ENCODE measurements at regions of chr3 and their contacts with region 1.

Region 1: DNA sequence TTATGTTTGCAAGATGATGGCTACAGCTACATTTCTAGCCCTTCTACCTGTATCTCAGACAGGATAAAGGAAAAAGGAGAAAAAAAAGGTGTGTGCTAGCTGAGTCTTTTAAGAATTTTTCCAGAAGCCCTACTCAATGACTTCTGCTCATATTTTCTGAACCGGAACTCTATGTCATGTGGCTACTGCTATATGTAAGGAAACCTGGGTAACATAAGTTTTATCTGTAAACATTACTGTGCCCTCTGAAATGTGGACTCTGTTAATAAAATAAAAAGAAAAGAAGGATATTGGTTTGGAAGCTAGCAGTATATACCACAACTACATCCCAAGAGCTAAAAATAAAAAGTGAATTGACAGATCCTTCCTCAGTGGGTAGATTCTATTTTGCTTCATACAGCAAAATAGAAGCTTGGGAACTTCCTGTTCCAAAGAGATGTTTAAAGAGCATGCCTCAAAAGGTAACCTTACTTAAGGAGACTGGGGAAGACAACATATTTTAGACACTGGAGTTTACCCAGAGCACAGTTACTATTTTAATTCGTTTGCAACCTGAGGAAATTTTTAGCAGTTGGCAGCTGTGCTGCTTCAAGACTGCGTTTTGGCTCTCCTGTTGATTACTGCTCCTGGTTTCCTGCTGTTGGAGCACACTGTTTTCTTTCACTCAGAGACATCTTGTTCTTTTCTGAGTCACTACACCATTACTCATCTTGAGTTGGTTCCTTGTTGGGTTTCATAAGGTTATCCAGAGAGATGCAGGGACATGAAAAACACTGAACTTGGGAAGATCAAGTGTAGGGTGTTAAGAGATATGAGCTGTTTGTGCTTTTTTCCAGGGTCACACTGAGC is 280.7 kb downstream of the NFKBIZ start:
- DNase-seq: no peak
- ATAC-seq: peak; percentile 91
- H3K4me3 ChIP-seq: no peak overlapping the region
- H3K27ac ChIP-seq: peak overlapping the region in 1 of 2 donors; percentile 43
- H3K4me1 ChIP-seq: peaks cover 3% of the 10 kb centered on the region in 2 donors
- H3K27me3 ChIP-seq: no peaks in the 10 kb centered on the region

Region 2: DNA sequence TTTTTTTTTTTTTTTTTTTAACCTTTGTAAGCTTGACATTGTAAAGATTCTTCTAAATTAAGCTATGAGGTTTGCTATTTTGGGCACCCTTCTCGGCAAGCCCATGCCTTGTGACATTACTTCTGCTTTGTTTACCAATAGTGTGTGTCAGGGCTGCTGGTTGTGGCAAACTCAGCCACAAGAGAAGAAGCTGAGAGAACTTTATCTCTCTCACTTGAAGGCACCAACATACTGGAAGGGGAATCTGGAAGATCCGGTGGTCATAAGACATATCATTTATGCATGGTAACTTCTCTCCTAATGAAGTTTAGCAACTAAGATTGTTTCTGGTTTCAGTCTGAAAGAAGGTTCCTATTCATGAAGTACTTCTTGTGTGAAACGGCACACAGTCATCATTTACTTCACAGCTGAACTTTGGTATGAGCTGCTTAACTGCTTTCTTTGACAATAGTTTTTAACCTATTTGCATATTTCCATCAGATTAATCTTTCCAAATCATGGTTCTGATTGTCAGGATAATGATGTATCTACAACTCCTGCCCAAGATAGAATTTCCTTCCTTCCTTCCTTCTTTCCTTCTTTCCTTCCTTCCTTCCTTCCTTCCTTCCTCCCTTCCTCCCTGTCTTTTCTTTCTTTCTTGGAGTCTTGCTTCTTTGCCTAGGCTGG is 91.4 kb before region 1 on chr3:
- intact Hi-C with region 1: loop called in 1 of 2 experiments (anchors 10 kb)
- DNase-seq: no peak
- ATAC-seq: no peak
- H3K4me3 ChIP-seq: no peak overlapping the region
- H3K27ac ChIP-seq: peak overlapping the region in 1 of 2 donors; percentile 78
- H3K4me1 ChIP-seq: peaks cover 0 to 4% of the 10 kb centered on the region in 2 donors
- H3K27me3 ChIP-seq: no peaks in the 10 kb centered on the region

Region 3: DNA sequence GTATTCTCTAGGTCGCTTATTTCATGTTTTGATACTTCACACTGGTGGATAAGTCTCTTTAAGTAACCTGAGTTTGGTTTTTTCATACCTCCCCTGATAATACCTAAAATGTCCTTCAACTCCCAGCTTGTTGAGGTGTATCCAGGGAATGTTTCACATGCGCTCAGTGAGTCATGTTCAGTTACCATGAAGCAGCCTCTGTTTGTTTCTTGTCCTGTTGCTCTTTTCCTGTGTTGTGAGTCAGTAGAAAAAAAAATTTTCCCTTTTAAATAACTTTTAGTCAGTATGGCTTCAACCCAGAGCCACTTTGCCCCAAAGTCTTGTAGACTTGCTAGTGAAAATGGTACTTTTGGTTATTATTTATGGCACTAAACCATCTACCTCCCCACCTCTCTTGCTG is 26.4 kb after region 1 on chr3:
- intact Hi-C with region 1: loop called in 1 of 2 experiments (anchors 2 kb)
- DNase-seq: no peak
- ATAC-seq: no peak
- H3K4me3 ChIP-seq: no peak overlapping the region
- H3K27ac ChIP-seq: peak overlapping the region; percentile 28 to 82
- H3K4me1 ChIP-seq: peaks cover 0 to 6% of the 10 kb centered on the region in 2 donors
- H3K27me3 ChIP-seq: no peaks in the 10 kb centered on the region